H1 (cell line): ENCODE measurements at regions of chr3 and their contacts with region 1.

Region 1: GRCh38 chr3:65020281-65021160 is 332.7 kb upstream of the ADAMTS9 start:
- DNase-seq: no peak
- H3K4me3 ChIP-seq: no peak overlapping the region
- H3K27ac ChIP-seq: no peak overlapping the region
- H3K4me1 ChIP-seq: no peaks in the 10 kb centered on the region; a peak in 1 of 7 replicates
- H3K27me3 ChIP-seq: no peaks in the 10 kb centered on the region
- CTCF ChIP-seq: no peak
- EP300 ChIP-seq: no peak
- POLR2A ChIP-seq: no peak
- RAD21 ChIP-seq: no peak

Region 2: GRCh38 chr3:64995857-64996551 is 24.5 kb before region 1 on chr3:
- CTCF ChIA-PET with region 1: interaction called, 27 read pairs
- POLR2A ChIA-PET with region 1: no interaction called
- DNase-seq: no peak
- H3K4me3 ChIP-seq: peak overlapping the region in 1 of 4 experiments; percentile 6; a peak in 1 of 8 replicates
- H3K27ac ChIP-seq: no peak overlapping the region
- H3K4me1 ChIP-seq: peaks cover 4 to 16% (median 5%) of the 10 kb centered on the region in 4 experiments; a peak in 6 of 7 replicates
- H3K27me3 ChIP-seq: no peaks in the 10 kb centered on the region
- CTCF ChIP-seq: no peak
- EP300 ChIP-seq: no peak
- POLR2A ChIP-seq: no peak
- RAD21 ChIP-seq: no peak

Region 3: DNA sequence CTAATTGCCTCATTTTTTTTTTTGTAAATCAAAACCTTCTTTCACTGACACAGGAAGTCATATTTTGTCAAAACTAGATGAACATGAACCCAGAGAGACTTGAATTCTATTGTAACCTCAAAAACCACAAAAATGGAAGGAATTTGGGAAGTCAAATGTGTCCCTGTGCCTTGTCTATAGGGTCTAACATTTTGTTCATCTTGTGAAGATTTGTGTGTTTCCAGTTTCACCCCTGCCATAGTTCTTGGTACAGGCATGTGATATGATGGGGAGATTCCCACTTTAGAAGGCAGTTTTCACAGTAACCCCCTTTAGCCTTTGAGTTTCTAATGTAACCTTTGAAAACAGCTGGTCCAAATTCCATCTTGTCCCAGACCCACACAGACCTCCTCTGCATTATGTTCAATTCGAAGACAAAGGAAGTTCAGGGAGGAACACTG is 14.2 kb before region 1 on chr3:
- CTCF ChIA-PET with region 1: interaction called, 18 read pairs
- POLR2A ChIA-PET with region 1: no interaction called
- DNase-seq: no peak
- H3K4me3 ChIP-seq: no peak overlapping the region
- H3K27ac ChIP-seq: no peak overlapping the region
- H3K4me1 ChIP-seq: no peaks in the 10 kb centered on the region
- H3K27me3 ChIP-seq: no peaks in the 10 kb centered on the region
- CTCF ChIP-seq: no peak
- EP300 ChIP-seq: no peak
- POLR2A ChIP-seq: no peak
- RAD21 ChIP-seq: no peak

Region 4: DNA sequence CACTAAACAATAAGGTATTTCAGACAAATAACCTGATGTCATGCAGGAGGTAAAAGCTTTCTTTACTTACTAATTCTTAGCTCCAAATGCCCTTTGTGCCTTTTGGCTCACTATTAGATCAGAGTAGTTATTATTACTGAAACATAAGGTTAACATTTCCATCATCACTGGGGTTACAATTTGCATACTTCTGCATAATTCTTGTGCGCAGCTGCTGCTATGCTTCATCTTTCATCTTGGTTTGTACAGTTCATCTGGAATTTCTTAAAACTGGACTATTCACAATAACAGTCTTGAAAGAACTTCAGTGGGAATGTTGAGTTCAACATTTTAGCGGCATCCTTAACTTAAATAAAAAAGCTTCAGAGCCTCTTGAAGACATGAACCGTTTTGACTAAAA is 50.4 kb after region 1 on chr3:
- CTCF ChIA-PET with region 1: no interaction called
- POLR2A ChIA-PET with region 1: no interaction called
- DNase-seq: no peak
- H3K4me3 ChIP-seq: no peak overlapping the region
- H3K27ac ChIP-seq: no peak overlapping the region
- H3K4me1 ChIP-seq: no peaks in the 10 kb centered on the region
- H3K27me3 ChIP-seq: no peaks in the 10 kb centered on the region
- CTCF ChIP-seq: no peak
- EP300 ChIP-seq: no peak
- POLR2A ChIP-seq: no peak
- RAD21 ChIP-seq: no peak

Region 5: DNA sequence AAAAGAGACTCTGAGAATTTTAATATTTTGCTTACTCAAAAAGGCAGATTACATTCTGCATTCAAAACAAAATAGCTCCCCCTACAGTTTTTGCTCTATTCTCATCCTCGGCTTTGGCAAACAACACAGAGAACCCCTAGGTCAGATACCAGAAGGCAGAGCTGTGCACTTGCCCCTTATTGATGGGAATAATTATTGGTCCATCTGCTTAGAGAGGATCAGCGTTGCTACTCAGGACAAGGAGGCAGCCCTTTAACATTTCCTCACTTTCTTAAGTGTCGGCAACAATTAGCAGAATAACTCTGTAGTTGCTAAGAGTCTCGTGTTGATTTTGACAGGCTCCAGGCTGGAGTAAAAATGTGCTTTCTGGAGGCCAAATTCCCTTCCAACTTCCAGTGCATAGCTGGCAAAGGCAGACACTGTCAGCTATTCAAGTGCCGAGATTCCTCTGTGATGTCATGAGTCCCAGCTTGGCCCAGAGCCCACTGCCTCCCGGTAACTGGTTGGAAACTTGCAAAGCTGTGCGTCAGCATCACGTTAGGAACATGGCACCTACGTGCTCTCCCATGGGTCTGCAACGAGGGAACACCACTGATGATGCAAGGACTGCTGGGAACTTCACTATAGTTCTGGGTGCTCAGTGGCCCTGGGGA is 150.0 kb after region 1 on chr3:
- CTCF ChIA-PET with region 1: interaction called, 11 read pairs
- POLR2A ChIA-PET with region 1: no interaction called
- DNase-seq: no peak
- H3K4me3 ChIP-seq: no peak overlapping the region
- H3K27ac ChIP-seq: no peak overlapping the region
- H3K4me1 ChIP-seq: no peaks in the 10 kb centered on the region
- H3K27me3 ChIP-seq: no peaks in the 10 kb centered on the region
- CTCF ChIP-seq: peak in 2 of 3 experiments; percentile 32 to 56; a peak in 2 of 4 replicates
- EP300 ChIP-seq: no peak
- POLR2A ChIP-seq: no peak
- RAD21 ChIP-seq: peak; percentile 66 to 75